ENCODE measurements at regions of chr2 and their contacts with region 1.

Region 1: DNA sequence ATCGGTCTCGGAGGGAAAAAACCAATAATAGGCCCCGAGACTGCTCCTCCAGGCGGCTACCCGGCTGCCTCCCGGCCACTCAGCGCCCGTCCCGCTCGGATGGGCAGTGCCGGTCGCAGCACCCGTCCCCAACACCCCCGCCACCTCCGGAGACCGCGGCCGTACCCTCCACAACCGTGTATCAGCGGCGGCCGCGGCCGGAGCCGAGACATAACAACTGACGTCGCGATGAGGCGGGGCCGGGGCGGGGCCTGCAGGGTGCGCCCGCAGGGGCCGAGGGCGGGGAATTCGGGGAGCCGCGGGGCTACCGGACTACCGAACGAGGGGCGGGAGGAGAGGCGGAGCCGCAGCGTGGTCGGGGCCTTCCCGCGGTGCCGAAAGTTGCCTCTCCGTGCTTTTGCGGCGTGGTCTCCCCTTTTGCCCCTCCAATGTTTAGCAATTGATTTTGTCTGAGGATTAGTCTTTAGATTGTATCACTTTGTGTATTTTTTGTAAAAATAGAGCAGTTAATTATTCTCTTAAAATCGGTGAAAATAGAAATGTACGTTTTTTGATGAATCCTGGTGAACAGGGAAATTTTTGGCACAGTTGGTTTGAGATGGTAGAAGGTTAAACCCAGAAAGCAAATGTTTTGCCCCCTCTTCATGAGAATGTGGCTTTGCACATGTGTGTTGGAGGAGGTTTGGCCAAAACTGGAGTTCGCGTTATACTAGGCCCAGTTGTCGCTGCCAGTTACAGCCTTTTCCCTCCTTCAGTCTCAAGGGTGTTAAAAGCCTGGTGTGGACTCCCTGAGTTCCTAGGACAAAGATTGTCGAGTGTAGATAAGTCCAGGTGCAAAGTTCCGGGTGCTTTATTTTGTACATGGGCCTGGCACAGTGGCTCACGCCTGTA is at the start of gene RNF103:
- DNase-seq: peak; percentile 98 to 99 (median 98)
- ATAC-seq: peak; percentile 96 to 98 (median 97)
- H3K4me3 ChIP-seq: peak within 1 kb of the TSS; percentile 50 to 93 (median 86)
- H3K27ac ChIP-seq: peak within 1 kb of the TSS; percentile 96 to 100 (median 98)
- H3K4me1 ChIP-seq: peaks cover 0 to 32% (median 20%) of the 10 kb centered on the region in 12 donors
- H3K27me3 ChIP-seq: no peaks in the 10 kb centered on the region
- CTCF ChIP-seq: peak in 1 of 12 donors; percentile 14
- POLR2A ChIP-seq: peak; percentile 98 to 100
- total RNA-seq, gene RNF103: 37.9 to 75.4 (median 55.3) TPM

Region 2: GRCh38 chr2:84999553-84999955 is 1624.3 kb before region 1 on chr2:
- intact Hi-C with region 1: no loop called
- DNase-seq: no peak
- ATAC-seq: no peak
- H3K4me3 ChIP-seq: no peak overlapping the region
- H3K27ac ChIP-seq: no peak overlapping the region
- H3K4me1 ChIP-seq: peaks cover 0 to 73% (median 49%) of the 10 kb centered on the region in 12 donors
- H3K27me3 ChIP-seq: no peaks in the 10 kb centered on the region
- CTCF ChIP-seq: no peak
- POLR2A ChIP-seq: no peak

Region 3: GRCh38 chr2:86195055-86195807 is 428.7 kb before region 1 on chr2 and contains the start of gene IMMT:
- intact Hi-C with region 1: loop called in 1 of 10 experiments (anchors 10 kb)
- DNase-seq: peak; percentile 97 to 99 (median 98)
- ATAC-seq: peak; percentile 92 to 96 (median 94)
- H3K4me3 ChIP-seq: peak within 1 kb of the TSS; percentile 65 to 98 (median 85)
- H3K27ac ChIP-seq: peak within 1 kb of the TSS; percentile 94 to 100 (median 98)
- H3K4me1 ChIP-seq: peaks cover under 1 to 66% (median 49%) of the 10 kb centered on the region in 12 donors
- H3K27me3 ChIP-seq: no peaks in the 10 kb centered on the region
- CTCF ChIP-seq: no peak
- POLR2A ChIP-seq: peak in 1 of 2 donors; percentile 72
- total RNA-seq, gene IMMT: 180 to 315 (median 231) TPM

Region 4: GRCh38 chr2:86464652-86465051 is 159.2 kb before region 1 on chr2:
- intact Hi-C with region 1: loop called in 1 of 10 experiments (anchors 10 kb)
- DNase-seq: peak in 4 of 5 donors; percentile 27 to 57 (median 44)
- ATAC-seq: peak; percentile 71 to 74 (median 72)
- H3K4me3 ChIP-seq: no peak overlapping the region
- H3K27ac ChIP-seq: peak overlapping the region in 7 of 12 donors; percentile 2 to 35 (median 6)
- H3K4me1 ChIP-seq: peaks cover 0 to 56% (median 28%) of the 10 kb centered on the region in 12 donors
- H3K27me3 ChIP-seq: no peaks in the 10 kb centered on the region
- CTCF ChIP-seq: no peak
- POLR2A ChIP-seq: no peak

Region 5: DNA sequence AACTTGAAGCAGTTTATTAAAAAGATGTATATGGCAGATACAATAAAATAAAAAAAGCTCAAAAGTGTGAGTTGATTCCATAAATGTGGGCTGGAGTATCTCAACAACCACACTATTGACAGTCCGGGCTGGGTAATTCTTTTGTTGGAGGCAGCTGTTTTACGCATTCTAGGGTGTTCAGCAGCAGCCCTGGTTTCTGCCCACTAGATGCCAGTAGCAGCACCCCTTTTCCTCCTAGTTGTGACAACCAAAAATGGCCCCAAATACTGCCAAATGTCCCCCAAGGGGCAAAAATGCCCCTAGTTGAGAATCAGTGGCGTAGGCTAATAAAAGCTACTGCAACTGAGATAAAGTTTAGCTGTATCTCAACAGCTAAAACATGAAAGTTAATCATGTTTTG is 105.4 kb before region 1 on chr2:
- intact Hi-C with region 1: loop called in 1 of 10 experiments (anchors 5 kb)
- DNase-seq: no peak
- ATAC-seq: peak in 3 of 4 donors; percentile 61 to 63 (median 63)
- H3K4me3 ChIP-seq: no peak overlapping the region
- H3K27ac ChIP-seq: peak overlapping the region in 1 of 12 donors; percentile 12
- H3K4me1 ChIP-seq: peaks cover 0 to 13% (median 2%) of the 10 kb centered on the region in 12 donors
- H3K27me3 ChIP-seq: no peaks in the 10 kb centered on the region
- CTCF ChIP-seq: peak in 11 of 12 donors; percentile 12 to 59 (median 45)
- POLR2A ChIP-seq: no peak

Region 6: DNA sequence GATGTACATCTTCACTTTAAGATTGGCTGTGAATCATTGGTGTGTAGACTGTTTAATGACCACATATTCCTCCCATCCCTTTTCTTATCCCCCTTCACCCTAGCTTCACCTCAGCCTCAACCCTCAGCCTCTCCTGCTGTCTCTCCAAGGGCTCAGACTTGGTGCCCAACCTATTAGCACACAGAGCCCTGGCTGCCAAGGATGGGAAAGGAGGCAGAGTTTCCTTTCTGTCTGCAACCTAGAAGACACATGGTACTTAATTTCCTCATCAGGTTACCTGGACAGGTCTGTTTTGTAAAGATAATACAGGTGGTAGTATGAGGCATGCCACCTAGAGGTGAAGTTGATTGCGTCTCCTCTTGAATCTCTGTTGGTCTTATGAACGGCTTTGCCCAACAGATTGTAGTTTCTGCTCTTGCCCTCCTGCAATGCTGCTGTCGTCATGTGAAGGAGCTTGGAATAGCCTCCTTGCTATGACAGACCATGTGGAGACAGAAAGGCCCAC is 51.7 kb after region 1 on chr2:
- intact Hi-C with region 1: loop called in 2 of 10 experiments (anchors 10 kb)
- DNase-seq: no peak
- ATAC-seq: no peak
- H3K4me3 ChIP-seq: no peak overlapping the region
- H3K27ac ChIP-seq: peak overlapping the region in 8 of 12 donors; percentile 1 to 69 (median 56)
- H3K4me1 ChIP-seq: peaks cover 0 to 29% (median 9%) of the 10 kb centered on the region in 12 donors
- H3K27me3 ChIP-seq: no peaks in the 10 kb centered on the region
- CTCF ChIP-seq: peak in 1 of 12 donors; percentile 8
- POLR2A ChIP-seq: no peak

Region 7: GRCh38 chr2:86764661-86765307 is 140.9 kb after region 1 on chr2:
- intact Hi-C with region 1: loop called in 2 of 10 experiments (anchors 5 kb)
- DNase-seq: no peak
- ATAC-seq: peak in 3 of 4 donors; percentile 42 to 49 (median 42)
- H3K4me3 ChIP-seq: no peak overlapping the region
- H3K27ac ChIP-seq: no peak overlapping the region
- H3K4me1 ChIP-seq: peaks cover 0 to 48% (median 21%) of the 10 kb centered on the region in 12 donors
- H3K27me3 ChIP-seq: no peaks in the 10 kb centered on the region
- CTCF ChIP-seq: peak; percentile 47 to 76 (median 66)
- POLR2A ChIP-seq: no peak

Region 8: DNA sequence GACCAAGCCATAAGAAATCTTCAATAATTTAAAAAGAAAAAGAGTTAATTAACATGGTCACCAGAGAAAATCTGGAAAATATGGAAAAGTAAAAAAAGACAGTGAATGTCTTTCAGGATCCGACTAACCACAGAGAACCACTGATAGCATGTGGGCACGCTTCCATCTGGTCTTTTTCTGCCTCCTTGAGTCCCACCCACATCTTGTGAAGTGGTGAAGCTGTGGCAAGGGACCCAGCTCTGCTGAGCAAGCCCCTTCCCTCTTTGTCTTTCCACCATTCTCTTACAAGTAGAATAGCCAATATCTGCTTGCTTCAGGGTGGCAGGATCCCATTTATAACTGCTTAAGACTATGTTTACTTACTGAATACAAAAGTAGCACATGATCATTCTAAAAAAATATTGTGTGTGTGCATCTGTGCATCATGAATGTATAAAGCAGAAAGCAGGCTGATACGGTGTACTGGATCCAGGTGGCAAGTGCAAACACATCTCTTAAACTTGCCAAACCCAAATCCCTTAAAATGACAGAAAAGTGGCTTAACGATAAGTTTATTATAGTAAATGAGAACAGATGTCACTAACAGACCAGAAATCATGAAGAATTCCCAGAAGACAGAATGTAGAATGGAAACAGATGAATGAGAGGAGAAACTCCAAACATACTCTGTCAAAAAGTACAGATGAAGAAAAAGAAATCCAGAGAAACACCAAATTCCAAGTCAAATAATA is 1776.3 kb after region 1 on chr2:
- intact Hi-C with region 1: no loop called
- DNase-seq: no peak
- ATAC-seq: no peak
- H3K4me3 ChIP-seq: no peak overlapping the region
- H3K27ac ChIP-seq: no peak overlapping the region
- H3K4me1 ChIP-seq: no peaks in the 10 kb centered on the region
- H3K27me3 ChIP-seq: peaks cover 0 to 30% (median 0%) of the 10 kb centered on the region in 9 donors
- CTCF ChIP-seq: no peak
- POLR2A ChIP-seq: no peak

Measured in heart left ventricle (tissue), 16 donors.